ENCODE measurements at regions of chr7 and their contacts with region 1.

Region 1: GRCh38 chr7:35714407-35714806 is 19.5 kb upstream of the HERPUD2 start:
- DNase-seq: no peak
- CTCF ChIP-seq: no peak

Region 2: GRCh38 chr7:35701287-35701900 is 13.0 kb before region 1 on chr7:
- CTCF ChIA-PET with region 1: interaction called, 334 read pairs
- POLR2A ChIA-PET with region 1: no interaction called
- DNase-seq: no peak
- CTCF ChIP-seq: no peak

Measured in GM10248 (cell line).